ENCODE measurements at regions of chr18 and their contacts with region 1.

Region 1: GRCh38 chr18:63320046-63320689 is 599 bp upstream of the BCL2 start:
- DNase-seq: peak; percentile 88 to 92
- H3K4me3 ChIP-seq: peak overlapping the region; percentile 70 to 85
- H3K27ac ChIP-seq: peak overlapping the region; percentile 83 to 91
- H3K4me1 ChIP-seq: peaks cover 0 to 50% (median 25%) of the 10 kb centered on the region in 4 donors
- H3K27me3 ChIP-seq: no peaks in the 10 kb centered on the region
- CTCF ChIP-seq: peak in 1 of 2 experiments; percentile 41

Region 2: GRCh38 chr18:63016270-63016669 is 303.9 kb before region 1 on chr18:
- intact Hi-C with region 1: loop called (anchors 5 kb)
- DNase-seq: no peak
- H3K4me3 ChIP-seq: no peak overlapping the region
- H3K27ac ChIP-seq: no peak overlapping the region
- H3K4me1 ChIP-seq: no peaks in the 10 kb centered on the region
- H3K27me3 ChIP-seq: peaks cover 0 to 16% of the 10 kb centered on the region in 2 donors
- CTCF ChIP-seq: peak; percentile 77 to 80

Region 3: GRCh38 chr18:63131106-63131958 is 188.8 kb before region 1 on chr18:
- intact Hi-C with region 1: loop called (anchors 5 kb)
- DNase-seq: peak in 1 of 2 donors; percentile 69
- H3K4me3 ChIP-seq: no peak overlapping the region
- H3K27ac ChIP-seq: peak overlapping the region; percentile 64 to 71
- H3K4me1 ChIP-seq: peaks cover 0 to 16% (median 7%) of the 10 kb centered on the region in 4 donors
- H3K27me3 ChIP-seq: no peaks in the 10 kb centered on the region
- CTCF ChIP-seq: peak; percentile 69 to 81

Region 4: GRCh38 chr18:63259826-63260680 is 60.1 kb before region 1 on chr18:
- intact Hi-C with region 1: loop called (anchors 2 kb)
- DNase-seq: no peak
- H3K4me3 ChIP-seq: no peak overlapping the region
- H3K27ac ChIP-seq: peak overlapping the region; percentile 79 to 83
- H3K4me1 ChIP-seq: peaks cover 0 to 53% (median 23%) of the 10 kb centered on the region in 4 donors
- H3K27me3 ChIP-seq: no peaks in the 10 kb centered on the region
- CTCF ChIP-seq: no peak

Region 5: DNA sequence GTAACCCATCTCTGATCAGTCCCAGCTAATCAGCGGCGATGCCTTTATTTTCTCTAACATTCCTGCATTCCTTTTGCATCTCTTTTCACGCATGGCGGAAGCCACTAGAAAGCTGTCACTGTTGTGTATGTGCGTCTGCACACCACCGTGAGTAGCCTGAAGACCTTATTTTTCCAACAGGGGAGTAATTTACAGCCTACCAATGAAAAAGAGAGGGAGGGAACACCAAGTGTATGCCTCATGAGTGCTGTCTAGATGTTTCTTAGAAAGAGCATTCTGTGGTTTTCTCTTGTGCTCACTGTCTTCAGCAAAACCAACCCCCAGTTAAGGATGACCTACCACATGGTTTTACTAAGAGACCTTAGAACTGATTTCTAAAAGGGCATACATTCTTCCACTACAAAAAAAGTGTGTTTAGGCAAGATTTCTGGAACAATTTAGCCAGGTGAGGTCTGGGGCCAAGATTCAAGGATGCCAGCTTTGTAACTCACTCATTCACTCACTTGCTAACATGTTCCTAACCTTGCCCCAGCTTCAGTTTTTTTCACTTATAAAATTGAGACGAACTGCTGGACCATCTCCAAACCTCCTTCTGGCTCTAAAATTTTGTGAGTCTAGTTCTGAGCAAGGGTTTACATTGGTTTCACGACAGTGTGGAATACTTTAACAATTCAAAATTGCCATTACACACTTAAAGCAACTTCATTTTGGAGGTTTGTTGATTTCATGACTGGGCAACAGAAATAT is 52.0 kb before region 1 on chr18:
- intact Hi-C with region 1: loop called (anchors 2 kb)
- DNase-seq: no peak
- H3K4me3 ChIP-seq: no peak overlapping the region
- H3K27ac ChIP-seq: peak overlapping the region in 1 of 2 donors; percentile 22
- H3K4me1 ChIP-seq: peaks cover 0 to 30% (median 21%) of the 10 kb centered on the region in 4 donors
- H3K27me3 ChIP-seq: no peaks in the 10 kb centered on the region
- CTCF ChIP-seq: no peak

Measured in tibial artery (tissue), 4 donors.